MCF 10A (cell line): ENCODE measurements at regions of chr10 and their contacts with region 1.

Region 1: DNA sequence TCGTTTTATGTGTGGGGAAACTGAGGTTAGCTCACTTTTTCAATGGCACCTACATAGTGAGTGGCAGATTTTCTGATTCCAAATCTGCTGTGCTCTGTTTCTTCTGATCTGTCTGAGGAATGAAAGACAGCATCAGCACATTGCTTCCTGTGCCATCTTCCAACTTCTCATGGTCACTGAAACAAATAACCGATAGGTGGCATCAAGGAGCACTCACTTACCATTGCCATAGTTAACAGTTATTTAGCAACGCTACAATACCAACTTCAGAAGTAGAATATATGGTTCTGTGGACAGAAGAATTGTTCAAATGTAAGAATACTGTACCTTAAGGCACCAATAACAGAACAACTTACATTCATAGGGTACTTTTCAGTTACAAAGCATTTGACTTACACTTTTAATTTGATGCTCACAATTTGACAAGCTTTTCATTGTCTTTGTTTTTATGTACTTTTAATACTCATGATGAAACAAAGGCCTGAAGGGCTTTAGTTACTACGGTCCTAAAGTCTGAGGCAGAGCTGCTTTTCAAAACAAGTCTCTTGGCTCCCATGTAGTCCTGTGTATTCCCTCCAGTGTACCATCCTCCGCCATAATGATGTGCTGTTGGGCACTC is 228.9 kb upstream of the TCF7L2 start:
- DNase-seq: peak; percentile 71
- H3K4me3 Mint-ChIP-seq: no peak overlapping the region
- H3K27ac Mint-ChIP-seq: no peak overlapping the region
- H3K4me1 Mint-ChIP-seq: peaks cover 7% of the 10 kb centered on the region
- H3K27me3 Mint-ChIP-seq: no peaks in the 10 kb centered on the region
- CTCF ChIP-seq: peak; percentile 78

Region 2: DNA sequence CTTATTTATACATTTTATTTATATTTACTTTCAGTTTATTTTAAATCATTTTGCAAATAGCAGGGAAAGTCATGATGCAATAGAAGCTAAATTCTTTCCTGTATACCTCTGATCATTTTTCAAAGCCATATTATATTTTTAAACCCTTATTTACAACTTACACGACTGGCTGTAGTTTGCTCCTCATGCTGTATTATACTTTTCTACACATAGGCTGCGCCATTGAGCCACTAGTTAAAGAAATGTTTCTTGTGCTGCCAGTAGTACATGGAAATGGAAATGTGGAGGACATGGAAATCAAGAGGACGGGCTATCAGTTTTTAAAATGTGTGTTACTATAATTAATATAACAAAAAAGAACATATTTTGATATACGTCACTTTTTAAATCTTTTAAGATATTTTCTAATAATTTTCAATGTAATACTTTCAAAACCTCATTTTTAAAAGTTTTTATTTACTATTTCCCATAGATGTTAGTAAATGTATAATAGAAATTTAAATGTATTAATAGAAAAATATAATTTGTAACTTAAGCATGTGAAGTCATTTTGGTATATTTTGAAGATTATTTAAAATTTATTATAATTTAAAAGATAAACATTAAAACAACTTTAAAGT is 155.6 kb before region 1 on chr10:
- CTCF ChIA-PET with region 1: no interaction called
- POLR2A ChIA-PET with region 1: interaction called, 4 read pairs
- intact Hi-C with region 1: loop called (anchors 5 kb)
- DNase-seq: peak; percentile 78
- H3K4me3 Mint-ChIP-seq: no peak overlapping the region
- H3K27ac Mint-ChIP-seq: no peak overlapping the region
- H3K4me1 Mint-ChIP-seq: no peaks in the 10 kb centered on the region
- H3K27me3 Mint-ChIP-seq: no peaks in the 10 kb centered on the region
- CTCF ChIP-seq: peak; percentile 80

Region 3: GRCh38 chr10:112732277-112732921 is 11.2 kb after region 1 on chr10:
- CTCF ChIA-PET with region 1: interaction called, 11 read pairs
- POLR2A ChIA-PET with region 1: interaction called, 3 read pairs
- intact Hi-C with region 1: no loop called
- DNase-seq: no peak
- H3K4me3 Mint-ChIP-seq: no peak overlapping the region
- H3K27ac Mint-ChIP-seq: peak overlapping the region; percentile 21
- H3K4me1 Mint-ChIP-seq: peaks cover 10% of the 10 kb centered on the region
- H3K27me3 Mint-ChIP-seq: no peaks in the 10 kb centered on the region
- CTCF ChIP-seq: no peak